Naive thymus-derived CD8-positive, alpha-beta T cell (primary cell): ENCODE measurements at regions of chr6 and their contacts with region 1.

Region 1: GRCh38 chr6:151390276-151391032 is 905 bp downstream of the ZBTB2 start:
- DNase-seq: peak; percentile 90 to 99 (median 98)
- ATAC-seq: peak; percentile 77 to 78
- H3K4me3 Mint-ChIP-seq: peak overlapping the region; percentile 66 to 97 (median 84)
- H3K27ac Mint-ChIP-seq: peak overlapping the region; percentile 53 to 99 (median 86)
- H3K4me1 Mint-ChIP-seq: peaks cover 22 to 74% (median 52%) of the 10 kb centered on the region in 4 donors
- H3K27me3 Mint-ChIP-seq: no peaks in the 10 kb centered on the region

Region 2: GRCh38 chr6:150865406-150866146 is 524.9 kb before region 1 on chr6 and contains the start of gene MTHFD1L:
- POLR2A ChIA-PET with region 1: interaction called, 10 read pairs
- DNase-seq: peak; percentile 42 to 79 (median 59)
- ATAC-seq: peak; percentile 69 to 73
- H3K4me3 Mint-ChIP-seq: peak within 1 kb of the TSS; percentile 79 to 97 (median 84)
- H3K27ac Mint-ChIP-seq: peak within 1 kb of the TSS in 9 of 10 donors; percentile 36 to 92 (median 78)
- H3K4me1 Mint-ChIP-seq: peaks cover 7 to 18% (median 13%) of the 10 kb centered on the region in 4 donors
- H3K27me3 Mint-ChIP-seq: peaks cover 4 to 26% (median 17%) of the 10 kb centered on the region in 5 donors
- polyA plus RNA-seq, gene MTHFD1L: 3.8 to 8.3 (median 5.1) TPM

Region 3: DNA sequence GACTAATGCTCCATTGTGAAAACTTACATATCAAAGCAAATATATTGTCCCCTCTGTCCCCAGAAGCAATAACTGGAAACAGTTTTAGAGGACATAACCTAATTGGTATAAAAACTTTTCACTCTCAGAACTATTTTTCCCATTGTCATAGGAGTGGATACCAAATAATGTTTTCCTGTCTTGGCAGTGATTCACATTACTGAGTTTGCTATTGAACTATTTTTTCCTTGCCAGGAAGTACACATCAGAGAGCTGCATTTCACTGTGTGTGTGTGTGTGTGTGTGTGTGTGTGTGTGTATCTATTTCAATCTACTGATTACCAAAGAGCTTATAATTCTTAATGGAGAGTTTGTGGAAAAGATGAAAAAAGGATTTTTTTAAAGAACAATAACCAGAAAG is 105.3 kb before region 1 on chr6:
- POLR2A ChIA-PET with region 1: no interaction called
- DNase-seq: no peak
- ATAC-seq: no peak
- H3K4me3 Mint-ChIP-seq: peak overlapping the region in 1 of 10 donors; percentile 22
- H3K27ac Mint-ChIP-seq: no peak overlapping the region
- H3K4me1 Mint-ChIP-seq: peaks cover 11 to 28% (median 23%) of the 10 kb centered on the region in 4 donors
- H3K27me3 Mint-ChIP-seq: peaks cover 6 to 49% (median 22%) of the 10 kb centered on the region in 5 donors

Region 4: GRCh38 chr6:151374036-151374683 is 16.3 kb before region 1 on chr6:
- POLR2A ChIA-PET with region 1: interaction called, 40 read pairs
- DNase-seq: no peak
- ATAC-seq: peak; percentile 35 to 38
- H3K4me3 Mint-ChIP-seq: peak overlapping the region; percentile 65 to 86 (median 76)
- H3K27ac Mint-ChIP-seq: peak overlapping the region; percentile 60 to 95 (median 84)
- H3K4me1 Mint-ChIP-seq: peaks cover 41 to 73% (median 72%) of the 10 kb centered on the region in 4 donors
- H3K27me3 Mint-ChIP-seq: no peaks in the 10 kb centered on the region

Region 5: GRCh38 chr6:151379933-151380847 is 10.3 kb before region 1 on chr6:
- POLR2A ChIA-PET with region 1: interaction called, 40 read pairs
- DNase-seq: peak in 2 of 10 donors; percentile 38 to 39
- ATAC-seq: peak; percentile 81 to 82
- H3K4me3 Mint-ChIP-seq: peak overlapping the region; percentile 77 to 94 (median 84)
- H3K27ac Mint-ChIP-seq: peak overlapping the region; percentile 92 to 98 (median 96)
- H3K4me1 Mint-ChIP-seq: peaks cover 40 to 76% (median 70%) of the 10 kb centered on the region in 4 donors
- H3K27me3 Mint-ChIP-seq: no peaks in the 10 kb centered on the region

Region 6: GRCh38 chr6:151413372-151414145 is 23.1 kb after region 1 on chr6:
- POLR2A ChIA-PET with region 1: interaction called, 22 read pairs
- DNase-seq: peak; percentile 8 to 80 (median 66)
- ATAC-seq: peak; percentile 98 to 100
- H3K4me3 Mint-ChIP-seq: peak overlapping the region in 8 of 10 donors; percentile 5 to 81 (median 60)
- H3K27ac Mint-ChIP-seq: peak overlapping the region; percentile 53 to 95 (median 82)
- H3K4me1 Mint-ChIP-seq: peaks cover 20 to 34% (median 23%) of the 10 kb centered on the region in 4 donors
- H3K27me3 Mint-ChIP-seq: no peaks in the 10 kb centered on the region

Region 7: GRCh38 chr6:151451950-151452749 is 61.7 kb after region 1 on chr6 and contains the start of gene RMND1:
- POLR2A ChIA-PET with region 1: interaction called, 49 read pairs
- DNase-seq: peak; percentile 96 to 100 (median 99)
- ATAC-seq: peak; percentile 94 to 96
- H3K4me3 Mint-ChIP-seq: peak within 1 kb of the TSS; percentile 85 to 99 (median 97)
- H3K27ac Mint-ChIP-seq: peak within 1 kb of the TSS; percentile 88 to 96 (median 94)
- H3K4me1 Mint-ChIP-seq: peaks cover 25 to 60% (median 56%) of the 10 kb centered on the region in 4 donors
- H3K27me3 Mint-ChIP-seq: no peaks in the 10 kb centered on the region
- polyA plus RNA-seq, gene RMND1: 7.7 to 13.9 (median 10.7) TPM

Region 8: DNA sequence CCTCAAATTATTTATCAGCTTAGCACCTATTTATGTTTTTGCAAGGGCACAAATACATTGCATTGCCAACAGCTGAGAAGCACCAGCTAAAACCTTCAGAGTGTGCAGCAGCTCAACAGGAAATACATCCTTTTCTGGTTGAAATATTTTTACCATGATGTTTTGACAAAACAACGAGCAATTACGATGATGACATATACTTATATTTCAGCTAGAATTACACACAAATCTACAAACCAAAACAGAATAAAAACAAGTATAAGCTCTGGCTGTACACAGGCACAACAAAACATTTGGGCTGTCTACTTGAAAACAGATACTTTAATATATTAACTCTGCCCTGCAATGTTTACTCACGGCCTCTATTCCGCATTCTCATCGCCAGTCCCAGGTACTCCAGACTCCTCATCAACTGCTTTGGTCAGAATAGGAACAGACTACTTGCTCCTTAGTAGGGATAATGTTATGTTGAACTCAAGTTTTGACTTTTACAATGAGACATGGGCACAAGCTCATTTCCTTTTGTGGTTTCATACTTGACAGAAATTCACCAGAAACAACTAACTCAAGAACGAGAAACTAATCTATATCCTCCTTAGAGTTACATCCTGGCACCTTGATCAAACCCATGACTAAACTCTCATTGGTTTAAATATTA is 794.6 kb after region 1 on chr6:
- POLR2A ChIA-PET with region 1: interaction called, 25 read pairs
- DNase-seq: peak in 6 of 10 donors; percentile 9 to 71 (median 38)
- ATAC-seq: peak; percentile 71 to 79
- H3K4me3 Mint-ChIP-seq: peak overlapping the region; percentile 92 to 99 (median 97)
- H3K27ac Mint-ChIP-seq: peak overlapping the region; percentile 93 to 100 (median 98)
- H3K4me1 Mint-ChIP-seq: peaks cover 24 to 87% (median 83%) of the 10 kb centered on the region in 4 donors
- H3K27me3 Mint-ChIP-seq: no peaks in the 10 kb centered on the region